ENCODE measurements at regions of chr3 and their contacts with region 1.

Region 1: DNA sequence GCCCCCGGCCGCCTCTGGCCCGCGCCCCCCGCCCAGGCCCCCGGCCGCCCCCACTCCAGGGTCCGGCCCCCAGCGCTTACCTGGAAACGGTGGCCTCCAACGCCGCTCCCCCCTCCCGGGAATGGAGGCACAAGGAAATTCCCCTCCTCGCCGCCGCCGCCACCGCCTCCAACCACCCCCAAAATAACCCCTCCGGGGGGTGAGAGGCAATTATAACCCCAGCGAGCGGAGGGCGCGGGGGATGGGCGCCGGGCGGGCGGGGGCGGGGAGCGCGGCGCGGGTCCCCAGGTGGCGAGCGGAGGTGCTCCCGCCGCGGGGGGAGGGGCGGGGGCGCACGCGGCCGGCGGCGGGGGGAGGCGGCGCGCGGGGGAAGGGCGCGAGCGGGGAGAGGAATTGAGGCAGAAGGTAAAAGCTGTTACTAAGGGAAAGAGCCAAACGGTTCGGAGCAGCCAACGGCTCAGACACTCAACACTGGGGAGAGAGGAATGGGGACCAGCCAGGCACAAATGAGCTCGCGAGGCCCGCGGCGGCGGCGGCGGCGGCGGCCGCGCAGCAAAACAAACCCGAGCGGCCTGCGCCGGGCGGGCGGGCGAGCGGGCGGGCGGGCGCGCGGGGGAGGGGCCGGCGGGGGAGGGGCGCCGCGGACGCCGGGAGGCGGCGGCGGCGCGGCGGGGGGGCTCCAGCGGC is at the start of gene TBL1XR1:
- DNase-seq: peak; percentile 94
- ATAC-seq: peak; percentile 77
- H3K4me3 ChIP-seq: peak within 1 kb of the TSS; percentile 96
- H3K27ac ChIP-seq: peak within 1 kb of the TSS; percentile 100
- H3K4me1 ChIP-seq: peaks cover 10% of the 10 kb centered on the region
- H3K27me3 ChIP-seq: no peaks in the 10 kb centered on the region
- CTCF ChIP-seq: no peak
- POLR2A ChIP-seq: no peak
- RAD21 ChIP-seq: peak; percentile 35; the same call in 1 of the 2 replicates
- total RNA-seq, gene TBL1XR1: 170 and 181 TPM in 2 replicates

Region 2: GRCh38 chr3:177149106-177149505 is 48.1 kb before region 1 on chr3:
- CTCF ChIA-PET with region 1: no interaction called
- POLR2A ChIA-PET with region 1: no interaction called
- dilution Hi-C with region 1: no loop called
- in situ Hi-C with region 1: no loop called
- intact Hi-C with region 1: loop called (anchors 2 kb)
- DNase-seq: no peak
- ATAC-seq: no peak
- H3K4me3 ChIP-seq: no peak overlapping the region
- H3K27ac ChIP-seq: no peak overlapping the region
- H3K4me1 ChIP-seq: peaks cover 14% of the 10 kb centered on the region
- H3K27me3 ChIP-seq: no peaks in the 10 kb centered on the region
- CTCF ChIP-seq: no peak
- POLR2A ChIP-seq: no peak
- RAD21 ChIP-seq: no peak

Region 3: GRCh38 chr3:177468331-177468730 is 271.1 kb after region 1 on chr3:
- CTCF ChIA-PET with region 1: no interaction called
- POLR2A ChIA-PET with region 1: no interaction called
- dilution Hi-C with region 1: no loop called
- in situ Hi-C with region 1: loop called (anchors 5 kb)
- intact Hi-C with region 1: loop called (anchors 5 kb)
- DNase-seq: peak; percentile 96
- ATAC-seq: peak; percentile 78
- H3K4me3 ChIP-seq: no peak overlapping the region
- H3K27ac ChIP-seq: peak overlapping the region; percentile 2; the same call in 1 of the 2 replicates
- H3K4me1 ChIP-seq: peaks cover 12% of the 10 kb centered on the region
- H3K27me3 ChIP-seq: no peaks in the 10 kb centered on the region
- CTCF ChIP-seq: no peak
- POLR2A ChIP-seq: no peak
- RAD21 ChIP-seq: no peak; the same call in 1 of the 2 replicates

Region 4: GRCh38 chr3:177516158-177517011 is 319.2 kb after region 1 on chr3:
- CTCF ChIA-PET with region 1: no interaction called
- POLR2A ChIA-PET with region 1: no interaction called
- dilution Hi-C with region 1: no loop called
- in situ Hi-C with region 1: no loop called
- intact Hi-C with region 1: loop called (anchors 1 kb)
- DNase-seq: peak; percentile 90
- ATAC-seq: peak; percentile 90
- H3K4me3 ChIP-seq: no peak overlapping the region
- H3K27ac ChIP-seq: peak overlapping the region; percentile 61
- H3K4me1 ChIP-seq: peaks cover 16% of the 10 kb centered on the region
- H3K27me3 ChIP-seq: no peaks in the 10 kb centered on the region
- CTCF ChIP-seq: no peak
- POLR2A ChIP-seq: no peak
- RAD21 ChIP-seq: no peak

Region 5: DNA sequence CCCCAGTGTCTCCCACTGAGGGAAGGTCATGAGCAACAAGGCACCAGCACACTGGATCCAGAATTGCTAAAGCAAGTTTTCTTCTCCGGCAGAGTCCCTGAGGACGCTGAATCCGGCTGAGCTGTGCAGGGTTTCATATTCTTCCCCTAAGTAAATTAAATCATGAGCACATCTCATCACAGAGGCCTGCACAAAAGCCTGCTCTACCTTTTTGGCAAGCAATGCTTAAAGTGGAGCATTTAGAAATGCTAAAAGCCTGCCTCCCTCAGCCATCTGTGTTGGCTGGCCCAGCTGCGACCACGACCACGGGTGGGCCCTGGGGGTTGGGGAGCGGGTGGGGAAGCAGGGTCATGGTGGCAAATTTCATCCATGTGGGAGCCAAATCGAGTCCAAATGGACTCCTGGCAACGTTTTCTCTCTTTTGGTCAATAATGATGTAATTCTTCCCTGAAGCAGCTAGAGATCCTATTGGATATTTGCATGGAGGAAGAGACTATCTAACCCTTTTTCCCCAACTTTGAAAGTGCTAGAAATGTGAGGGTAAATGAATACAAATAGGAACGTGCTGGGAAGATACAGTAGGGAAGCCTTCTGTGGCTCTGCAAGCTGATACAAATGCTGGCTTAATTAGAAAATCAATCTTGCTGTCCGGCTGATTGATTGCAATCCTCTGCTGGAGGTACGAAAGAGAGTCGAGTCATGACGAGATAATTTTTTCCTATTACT is 532.9 kb after region 1 on chr3:
- CTCF ChIA-PET with region 1: no interaction called
- POLR2A ChIA-PET with region 1: no interaction called
- dilution Hi-C with region 1: no loop called
- in situ Hi-C with region 1: no loop called
- intact Hi-C with region 1: loop called (anchors 5 kb)
- DNase-seq: no peak
- ATAC-seq: no peak
- H3K4me3 ChIP-seq: no peak overlapping the region
- H3K27ac ChIP-seq: peak overlapping the region; percentile 34; the same call in 1 of the 2 replicates
- H3K4me1 ChIP-seq: peaks cover 9% of the 10 kb centered on the region
- H3K27me3 ChIP-seq: no peaks in the 10 kb centered on the region
- CTCF ChIP-seq: no peak
- POLR2A ChIP-seq: no peak
- RAD21 ChIP-seq: no peak

Region 6: GRCh38 chr3:177824190-177824786 is 627.1 kb after region 1 on chr3:
- CTCF ChIA-PET with region 1: no interaction called
- POLR2A ChIA-PET with region 1: no interaction called
- dilution Hi-C with region 1: no loop called
- in situ Hi-C with region 1: no loop called
- intact Hi-C with region 1: loop called (anchors 10 kb)
- DNase-seq: peak; percentile 55
- ATAC-seq: peak; percentile 73
- H3K4me3 ChIP-seq: no peak overlapping the region
- H3K27ac ChIP-seq: peak overlapping the region; percentile 60; the same call in 1 of the 2 replicates
- H3K4me1 ChIP-seq: peaks cover 21% of the 10 kb centered on the region
- H3K27me3 ChIP-seq: no peaks in the 10 kb centered on the region
- CTCF ChIP-seq: no peak
- POLR2A ChIP-seq: no peak
- RAD21 ChIP-seq: no peak

Region 7: DNA sequence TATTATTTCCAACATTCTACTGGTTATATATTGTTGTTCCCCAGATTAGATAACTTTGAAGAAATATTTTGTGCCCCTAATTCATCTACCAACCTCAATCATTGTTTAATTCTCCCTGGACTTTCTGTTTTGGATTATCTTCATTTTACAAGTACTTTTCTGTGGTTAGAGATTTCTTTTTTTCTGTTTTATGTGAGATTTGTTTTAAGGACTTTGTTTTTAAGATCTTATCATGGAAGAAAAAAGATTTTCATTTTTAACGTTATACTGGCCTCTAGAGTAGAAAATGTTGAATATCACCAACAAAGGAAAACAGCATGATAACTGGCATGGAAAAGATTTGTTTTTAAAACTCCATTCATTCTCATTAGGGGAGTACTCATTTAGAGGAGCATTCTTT is 1128.1 kb after region 1 on chr3:
- CTCF ChIA-PET with region 1: no interaction called
- POLR2A ChIA-PET with region 1: no interaction called
- dilution Hi-C with region 1: no loop called
- in situ Hi-C with region 1: no loop called
- intact Hi-C with region 1: loop called (anchors 1 kb)
- DNase-seq: peak; percentile 64
- ATAC-seq: peak; percentile 68
- H3K4me3 ChIP-seq: no peak overlapping the region
- H3K27ac ChIP-seq: no peak overlapping the region
- H3K4me1 ChIP-seq: peaks cover 9% of the 10 kb centered on the region
- H3K27me3 ChIP-seq: no peaks in the 10 kb centered on the region
- CTCF ChIP-seq: peak; percentile 64
- POLR2A ChIP-seq: no peak
- RAD21 ChIP-seq: peak; percentile 64

Measured in IMR-90 (cell line).